GM10248 (cell line): ENCODE measurements at regions of chr6 and their contacts with region 1.

Region 1: GRCh38 chr6:43667245-43668150 is 20.1 kb downstream of the MRPS18A start:
- DNase-seq: peak; percentile 86
- CTCF ChIP-seq: peak; percentile 100

Region 2: GRCh38 chr6:43629505-43630300 is 37.8 kb before region 1 on chr6:
- CTCF ChIA-PET with region 1: interaction called, 32 read pairs
- POLR2A ChIA-PET with region 1: interaction called, 3 read pairs
- DNase-seq: peak; percentile 98
- CTCF ChIP-seq: no peak

Region 3: GRCh38 chr6:43644931-43645612 is 22.4 kb before region 1 on chr6 and contains the start of gene RSPH9:
- CTCF ChIA-PET with region 1: interaction called, 42 read pairs
- POLR2A ChIA-PET with region 1: interaction called, 4 read pairs
- DNase-seq: peak; percentile 81
- CTCF ChIP-seq: no peak

Region 4: DNA sequence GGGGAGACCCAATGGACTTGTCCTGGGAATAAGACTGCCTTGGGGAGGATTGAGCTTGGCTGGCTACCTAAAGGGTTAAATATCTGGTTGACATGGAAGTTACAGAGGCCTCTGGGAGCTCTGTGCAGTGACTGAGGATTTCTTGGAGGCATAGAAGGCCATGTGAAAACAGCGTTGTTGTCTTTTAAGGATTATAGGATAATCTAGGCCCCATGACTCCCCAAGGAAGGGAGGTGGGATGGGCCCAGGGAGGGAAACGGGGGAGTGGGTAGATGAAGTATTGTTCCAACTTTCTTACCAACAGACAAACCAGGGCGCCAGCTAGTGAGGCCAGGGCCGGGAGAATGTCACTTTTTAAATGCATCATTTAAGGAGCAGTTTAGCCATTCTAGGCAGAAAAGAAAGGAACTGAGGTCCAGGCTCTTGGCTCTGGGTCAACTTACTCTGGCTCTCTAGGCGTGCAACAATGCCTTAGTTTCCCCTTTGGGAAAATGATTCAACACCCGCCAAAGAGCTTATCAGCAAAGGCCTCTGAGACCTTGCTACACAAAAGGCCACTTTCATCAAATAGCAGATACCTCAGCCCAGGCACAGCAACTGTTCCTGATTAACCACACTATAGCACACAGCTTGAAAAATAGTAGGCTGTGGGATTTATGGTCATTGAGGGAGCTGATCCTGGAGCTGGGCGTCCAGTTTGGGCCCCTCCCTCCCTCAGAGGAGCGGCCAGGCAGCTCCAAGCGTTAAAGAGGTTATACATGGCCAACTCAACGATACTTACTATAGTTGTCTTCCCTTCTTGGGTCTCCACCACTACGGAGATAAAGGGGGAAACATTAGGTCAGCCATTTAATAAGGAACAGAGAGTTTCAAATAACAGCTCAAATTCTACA is 13.1 kb after region 1 on chr6:
- CTCF ChIA-PET with region 1: interaction called, 152 read pairs
- POLR2A ChIA-PET with region 1: no interaction called
- DNase-seq: no peak
- CTCF ChIP-seq: no peak

Region 5: DNA sequence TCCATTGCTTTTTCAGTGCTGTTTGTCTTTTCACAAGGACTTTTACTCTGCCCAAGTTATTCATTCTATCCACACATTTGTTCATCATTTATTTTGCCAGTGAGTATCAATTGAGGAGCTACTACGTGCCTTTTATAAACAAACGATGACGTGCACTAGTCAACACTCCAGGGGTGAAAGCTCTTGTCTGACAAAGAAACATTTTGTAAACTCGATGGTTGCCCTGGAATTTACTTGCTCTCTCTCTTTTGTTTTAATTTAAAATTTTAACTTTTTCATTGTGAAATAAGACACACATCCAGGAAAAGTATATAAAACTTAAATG is 28.4 kb after region 1 on chr6:
- CTCF ChIA-PET with region 1: interaction called, 152 read pairs
- POLR2A ChIA-PET with region 1: no interaction called
- DNase-seq: no peak
- CTCF ChIP-seq: no peak

Region 6: GRCh38 chr6:43758617-43759050 is 91.1 kb after region 1 on chr6:
- CTCF ChIA-PET with region 1: interaction called, 22 read pairs
- POLR2A ChIA-PET with region 1: interaction called, 8 read pairs
- DNase-seq: peak; percentile 68
- CTCF ChIP-seq: peak; percentile 77

Region 7: DNA sequence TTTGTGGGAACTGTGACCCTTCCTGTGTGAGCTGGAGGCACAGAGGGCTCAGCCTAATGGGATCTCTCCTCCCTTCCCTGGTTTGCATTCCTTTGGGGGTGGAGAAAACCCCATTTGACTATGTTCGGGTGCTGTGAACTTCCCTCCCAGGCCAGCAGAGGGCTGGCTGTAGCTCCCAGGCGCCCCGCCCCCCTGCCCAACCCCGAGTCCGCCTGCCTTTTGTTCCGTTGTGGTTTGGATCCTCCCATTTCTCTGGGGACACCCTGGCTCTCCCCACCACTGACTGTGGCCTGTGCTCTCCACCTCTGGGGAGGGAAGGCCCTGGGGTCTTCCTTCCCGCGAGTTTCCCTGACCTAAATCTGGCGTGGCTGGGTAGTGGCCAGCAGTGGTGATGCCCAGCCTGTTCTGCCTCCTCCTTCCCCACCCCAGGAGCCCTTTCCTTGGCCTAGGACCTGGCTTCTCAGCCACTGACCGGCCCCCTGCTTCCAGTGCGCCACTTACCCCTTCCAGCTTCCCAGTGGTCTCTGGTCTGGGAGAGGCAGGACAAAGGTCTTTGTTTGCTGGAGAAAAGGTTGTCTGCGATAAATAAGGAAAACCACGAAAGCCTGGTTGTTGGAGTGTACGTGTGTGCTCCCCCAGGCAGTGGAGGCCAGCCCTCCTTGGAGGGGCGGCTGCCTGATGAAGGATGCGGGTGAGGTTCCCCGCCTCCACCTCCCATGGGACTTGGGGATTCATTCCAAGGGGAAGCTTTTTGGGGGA is 107.5 kb after region 1 on chr6:
- CTCF ChIA-PET with region 1: interaction called, 83 read pairs
- POLR2A ChIA-PET with region 1: no interaction called
- DNase-seq: peak; percentile 88
- CTCF ChIP-seq: peak; percentile 70